ENCODE measurements at regions of chr9 and their contacts with region 1.

Region 1: GRCh38 chr9:127503947-127504782 is 52.9 kb downstream of the LRSAM1 start:
- DNase-seq: peak; percentile 86
- H3K4me3 ChIP-seq: no peak overlapping the region; a peak in 1 of 4 replicates
- H3K27ac ChIP-seq: peak overlapping the region; percentile 4 to 59; a peak in 3 of 4 replicates
- H3K4me1 ChIP-seq: peaks cover 10 to 18% of the 10 kb centered on the region in 2 experiments; a peak in 2 of 4 replicates
- H3K27me3 ChIP-seq: no peaks in the 10 kb centered on the region
- CTCF ChIP-seq: peak; percentile 78
- EP300 ChIP-seq: no peak
- RAD21 ChIP-seq: peak; percentile 91

Region 2: DNA sequence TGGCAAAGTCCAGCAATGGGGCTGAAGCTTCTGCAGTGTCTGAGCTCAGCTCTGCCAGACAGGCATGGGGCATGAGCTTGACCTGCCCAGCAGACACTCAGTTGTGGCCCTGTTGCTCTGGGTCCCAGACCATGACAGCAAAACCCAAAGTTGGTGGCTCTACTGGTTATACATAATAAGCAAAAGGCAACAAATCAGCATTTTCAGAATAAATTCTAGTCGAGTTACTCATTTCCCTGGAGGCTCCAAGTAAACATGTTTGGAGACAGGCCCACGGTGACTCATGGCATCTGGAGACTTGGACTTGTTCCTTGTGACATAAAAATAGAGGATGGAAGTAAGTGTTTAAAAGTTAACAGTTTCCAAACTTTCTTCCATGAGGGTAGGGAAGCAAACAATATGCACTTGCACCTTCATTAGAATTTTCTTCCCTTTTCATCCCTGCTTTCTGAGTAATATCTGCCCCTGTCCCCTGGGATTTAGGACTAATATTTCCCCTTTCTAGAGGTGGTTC is 167.4 kb before region 1 on chr9:
- CTCF ChIA-PET with region 1: no interaction called
- POLR2A ChIA-PET with region 1: no interaction called
- DNase-seq: no peak
- H3K4me3 ChIP-seq: no peak overlapping the region
- H3K27ac ChIP-seq: peak overlapping the region; percentile 81 to 82
- H3K4me1 ChIP-seq: peaks cover 13 to 19% of the 10 kb centered on the region in 2 experiments
- H3K27me3 ChIP-seq: no peaks in the 10 kb centered on the region
- CTCF ChIP-seq: no peak
- EP300 ChIP-seq: peak; percentile 20 to 80; a peak in 2 of 4 replicates
- RAD21 ChIP-seq: no peak

Region 3: GRCh38 chr9:127450830-127451724 is 53.1 kb before region 1 on chr9 and contains the starts of genes LRSAM1 and RPL12:
- CTCF ChIA-PET with region 1: interaction called, 11 read pairs
- POLR2A ChIA-PET with region 1: no interaction called
- DNase-seq: peak; percentile 95
- H3K4me3 ChIP-seq: peak within 1 kb of the TSS; percentile 92 to 99
- H3K27ac ChIP-seq: peak within 1 kb of the TSS; percentile 77 to 95
- H3K4me1 ChIP-seq: peaks cover 5 to 40% of the 10 kb centered on the region in 2 experiments; a peak in 3 of 4 replicates
- H3K27me3 ChIP-seq: no peaks in the 10 kb centered on the region
- CTCF ChIP-seq: peak; percentile 10; the same call in 1 of the 2 replicates
- EP300 ChIP-seq: peak in 1 of 2 experiments; percentile 20; a peak in 1 of 4 replicates
- RAD21 ChIP-seq: no peak
- polyA plus RNA-seq, gene LRSAM1: 5.5 and 8.0 TPM in 2 replicates
- polyA plus RNA-seq, gene RPL12: 3,270 and 3,754 TPM in 2 replicates

Region 4: GRCh38 chr9:127516835-127517539 is 12.8 kb after region 1 on chr9:
- CTCF ChIA-PET with region 1: interaction called, 18 read pairs
- POLR2A ChIA-PET with region 1: no interaction called
- DNase-seq: no peak
- H3K4me3 ChIP-seq: no peak overlapping the region
- H3K27ac ChIP-seq: peak overlapping the region in 1 of 2 experiments; percentile 99; a peak in 2 of 4 replicates
- H3K4me1 ChIP-seq: peaks cover 7 to 27% of the 10 kb centered on the region in 2 experiments; a peak in 3 of 4 replicates
- H3K27me3 ChIP-seq: no peaks in the 10 kb centered on the region
- CTCF ChIP-seq: no peak
- EP300 ChIP-seq: no peak
- RAD21 ChIP-seq: no peak

Region 5: GRCh38 chr9:127555768-127556397 is 51.7 kb after region 1 on chr9:
- CTCF ChIA-PET with region 1: interaction called, 23 read pairs
- POLR2A ChIA-PET with region 1: no interaction called
- DNase-seq: no peak
- H3K4me3 ChIP-seq: peak overlapping the region in 1 of 2 experiments; percentile 50; a peak in 2 of 4 replicates
- H3K27ac ChIP-seq: peak overlapping the region; percentile 65 to 94
- H3K4me1 ChIP-seq: peaks cover 33 to 59% of the 10 kb centered on the region in 2 experiments; a peak in 3 of 4 replicates
- H3K27me3 ChIP-seq: no peaks in the 10 kb centered on the region
- CTCF ChIP-seq: no peak
- EP300 ChIP-seq: no peak; a peak in 1 of 4 replicates
- RAD21 ChIP-seq: no peak

Region 6: DNA sequence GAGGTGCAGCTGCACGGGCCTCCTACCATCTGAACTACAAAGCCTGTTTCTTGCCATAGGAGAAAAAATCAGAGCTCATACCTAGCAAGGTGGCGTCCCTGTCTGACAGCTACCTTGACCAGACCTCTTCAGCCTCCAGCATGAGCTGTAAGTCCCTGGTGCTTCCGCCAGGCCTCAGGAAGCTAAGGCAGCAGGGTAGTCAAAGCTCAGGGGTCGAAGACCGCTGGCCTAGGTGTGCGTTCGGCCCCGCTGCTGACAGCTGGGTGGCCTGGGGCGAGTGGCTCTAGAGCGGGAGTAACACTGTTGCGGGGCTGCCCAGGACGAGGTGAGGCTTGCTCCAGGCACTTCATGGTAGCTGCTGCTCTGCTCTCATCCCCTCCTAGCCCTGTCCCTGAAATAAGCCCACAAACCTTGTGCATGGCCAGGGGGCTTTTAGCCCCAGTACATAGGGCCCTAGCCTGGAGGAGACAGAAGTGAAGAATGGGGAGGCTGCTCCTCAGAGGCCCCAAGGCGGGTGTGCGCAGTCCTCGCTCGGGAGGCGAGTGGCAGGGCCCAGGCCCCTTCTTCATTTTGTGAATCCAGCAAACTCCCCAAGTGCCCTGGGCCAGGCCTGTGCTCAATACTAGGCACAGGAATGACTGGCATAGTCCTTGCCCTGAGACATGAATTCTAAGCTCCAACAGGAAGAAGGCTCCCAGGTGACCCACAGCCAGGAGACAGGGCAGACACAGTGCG is 225.5 kb after region 1 on chr9:
- CTCF ChIA-PET with region 1: interaction called, 21 read pairs
- POLR2A ChIA-PET with region 1: no interaction called
- DNase-seq: no peak
- H3K4me3 ChIP-seq: no peak overlapping the region
- H3K27ac ChIP-seq: no peak overlapping the region
- H3K4me1 ChIP-seq: peaks cover 5 to 8% of the 10 kb centered on the region in 2 experiments; a peak in 1 of 4 replicates
- H3K27me3 ChIP-seq: no peaks in the 10 kb centered on the region
- CTCF ChIP-seq: no peak
- EP300 ChIP-seq: no peak
- RAD21 ChIP-seq: no peak

Measured in SK-N-SH (cell line).